Cardiac septum (tissue), 1 donor: ENCODE measurements at regions of chr13 and their contacts with region 1.

Region 1: GRCh38 chr13:112873851-112874750 is 94.9 kb upstream of the MCF2L start:
- DNase-seq: peak; percentile 87

Region 2: GRCh38 chr13:111474136-111475002 is 1399.7 kb before region 1 on chr13:
- intact Hi-C with region 1: loop called (anchors 10 kb)
- DNase-seq: no peak

Region 3: DNA sequence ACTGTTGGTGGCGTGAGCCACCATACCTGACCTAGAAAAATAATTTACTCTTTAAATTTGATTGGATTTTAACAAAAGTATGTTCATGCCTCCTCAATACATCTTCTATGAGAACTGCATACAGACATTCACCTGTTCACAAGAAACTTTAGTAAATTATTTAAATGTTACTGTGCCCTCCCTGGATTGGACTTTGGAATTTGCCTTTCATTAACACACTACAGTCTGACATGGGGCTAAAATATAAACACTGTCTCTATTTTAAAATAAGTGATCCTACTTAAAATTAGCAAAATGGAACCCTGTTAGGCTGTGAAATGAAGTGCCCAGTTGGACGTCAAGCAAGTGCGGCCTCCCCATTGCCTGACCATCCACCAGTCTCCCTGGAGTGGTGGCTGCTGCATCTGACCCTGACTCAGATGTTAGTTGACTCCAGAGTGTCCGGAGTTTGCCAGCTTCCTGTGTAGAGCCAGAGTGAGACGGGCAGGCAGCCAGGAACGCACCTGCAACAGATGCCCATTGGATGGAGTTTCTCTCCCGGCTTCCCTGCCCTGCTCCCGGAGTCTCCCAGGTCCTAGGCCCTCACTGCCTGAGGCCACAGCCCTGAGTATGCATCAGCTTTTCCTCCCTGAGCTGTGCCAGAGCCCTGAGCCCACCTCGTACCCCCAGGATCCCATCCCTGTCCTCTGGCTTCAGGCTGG is 230.2 kb before region 1 on chr13:
- intact Hi-C with region 1: loop called (anchors 1 kb)
- DNase-seq: peak; percentile 54